ENCODE measurements at regions of chr1 and their contacts with region 1.

Region 1: DNA sequence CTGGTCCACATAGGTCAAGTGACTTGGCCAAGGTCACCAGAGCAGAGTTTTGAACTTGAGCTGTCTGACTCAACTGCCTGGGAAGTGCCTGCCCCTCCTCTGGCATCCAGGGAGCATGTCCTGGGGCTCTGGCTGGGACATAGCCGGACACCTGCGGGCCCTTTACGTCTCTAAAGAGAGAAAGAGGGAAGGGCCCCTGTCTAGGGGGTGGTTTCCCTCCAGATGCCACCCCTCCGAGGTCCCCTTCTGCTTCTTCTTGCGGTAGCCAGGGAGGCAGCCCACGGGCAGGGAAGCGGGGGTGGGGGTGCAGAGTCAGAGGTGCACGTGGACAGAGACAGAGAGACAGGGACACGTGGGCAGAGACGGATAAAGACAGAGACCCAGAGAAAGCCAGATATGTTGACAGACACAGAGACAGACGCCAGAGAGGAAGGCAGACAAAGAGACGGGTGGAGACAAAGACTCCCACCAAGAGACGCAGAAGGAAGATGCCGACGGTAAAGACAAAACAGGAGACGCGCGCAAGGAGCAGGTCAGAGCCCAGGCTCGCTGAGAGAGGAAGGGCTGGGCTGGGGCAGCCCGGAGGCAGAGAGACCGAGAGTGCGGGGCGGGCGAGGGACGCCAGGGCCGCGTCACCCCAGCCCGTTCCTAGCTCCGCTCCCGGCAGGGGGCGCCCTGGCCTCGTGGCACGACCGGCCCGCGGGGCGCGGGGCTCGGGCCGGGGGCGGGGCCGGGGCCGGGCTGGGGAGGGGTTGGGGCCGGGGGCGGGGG is 458 bp upstream of the ALPL start:
- DNase-seq: peak; percentile 31
- ATAC-seq: peak; percentile 83
- H3K4me3 ChIP-seq: 0 out of 2 replicates have a peak overlapping the region, but pooled peaks have one; percentile 4
- H3K27ac ChIP-seq: no peak overlapping the region
- H3K4me1 ChIP-seq: peaks cover 12% of the 10 kb centered on the region
- H3K27me3 ChIP-seq: peaks cover 16% of the 10 kb centered on the region
- CTCF ChIP-seq: peak; percentile 68
- POLR2A ChIP-seq: no peak
- RAD21 ChIP-seq: peak; percentile 65

Region 2: DNA sequence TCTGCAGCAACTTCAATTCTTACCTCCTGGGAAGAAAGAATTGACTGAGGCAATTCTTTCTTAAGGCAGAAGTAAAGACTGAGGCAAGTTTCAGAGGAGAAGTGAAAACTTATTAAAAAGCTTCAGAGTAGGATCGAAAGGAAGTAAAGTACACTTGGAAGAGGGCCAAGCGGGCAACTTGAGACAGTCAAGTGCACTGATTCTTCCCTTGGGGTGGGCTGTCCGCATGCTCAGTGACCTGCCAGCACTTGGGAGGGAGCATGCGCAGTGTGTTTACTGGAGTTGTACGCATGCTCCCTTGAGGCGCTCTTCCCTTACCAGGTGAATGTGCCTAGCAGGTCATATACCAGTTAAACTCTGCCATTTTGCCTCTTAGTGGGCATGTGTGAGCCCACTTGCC is 124.1 kb before region 1 on chr1:
- CTCF ChIA-PET with region 1: no interaction called
- POLR2A ChIA-PET with region 1: no interaction called
- dilution Hi-C with region 1: no loop called
- in situ Hi-C with region 1: no loop called
- intact Hi-C with region 1: no loop called
- DNase-seq: no peak
- ATAC-seq: no peak
- H3K4me3 ChIP-seq: no peak overlapping the region
- H3K27ac ChIP-seq: no peak overlapping the region
- H3K4me1 ChIP-seq: no peaks in the 10 kb centered on the region
- H3K27me3 ChIP-seq: peaks cover 35% of the 10 kb centered on the region
- CTCF ChIP-seq: no peak
- POLR2A ChIP-seq: no peak
- RAD21 ChIP-seq: no peak

Region 3: GRCh38 chr1:21573971-21574465 is 65.3 kb after region 1 on chr1:
- CTCF ChIA-PET with region 1: no interaction called
- POLR2A ChIA-PET with region 1: no interaction called
- dilution Hi-C with region 1: no loop called
- in situ Hi-C with region 1: no loop called
- intact Hi-C with region 1: loop called (anchors 1 kb)
- DNase-seq: peak; percentile 75
- ATAC-seq: peak; percentile 89
- H3K4me3 ChIP-seq: no peak overlapping the region
- H3K27ac ChIP-seq: no peak overlapping the region
- H3K4me1 ChIP-seq: no peaks in the 10 kb centered on the region
- H3K27me3 ChIP-seq: no peaks in the 10 kb centered on the region; the same call in 1 of the 2 replicates
- CTCF ChIP-seq: peak; percentile 76
- POLR2A ChIP-seq: no peak
- RAD21 ChIP-seq: peak; percentile 83

Region 4: DNA sequence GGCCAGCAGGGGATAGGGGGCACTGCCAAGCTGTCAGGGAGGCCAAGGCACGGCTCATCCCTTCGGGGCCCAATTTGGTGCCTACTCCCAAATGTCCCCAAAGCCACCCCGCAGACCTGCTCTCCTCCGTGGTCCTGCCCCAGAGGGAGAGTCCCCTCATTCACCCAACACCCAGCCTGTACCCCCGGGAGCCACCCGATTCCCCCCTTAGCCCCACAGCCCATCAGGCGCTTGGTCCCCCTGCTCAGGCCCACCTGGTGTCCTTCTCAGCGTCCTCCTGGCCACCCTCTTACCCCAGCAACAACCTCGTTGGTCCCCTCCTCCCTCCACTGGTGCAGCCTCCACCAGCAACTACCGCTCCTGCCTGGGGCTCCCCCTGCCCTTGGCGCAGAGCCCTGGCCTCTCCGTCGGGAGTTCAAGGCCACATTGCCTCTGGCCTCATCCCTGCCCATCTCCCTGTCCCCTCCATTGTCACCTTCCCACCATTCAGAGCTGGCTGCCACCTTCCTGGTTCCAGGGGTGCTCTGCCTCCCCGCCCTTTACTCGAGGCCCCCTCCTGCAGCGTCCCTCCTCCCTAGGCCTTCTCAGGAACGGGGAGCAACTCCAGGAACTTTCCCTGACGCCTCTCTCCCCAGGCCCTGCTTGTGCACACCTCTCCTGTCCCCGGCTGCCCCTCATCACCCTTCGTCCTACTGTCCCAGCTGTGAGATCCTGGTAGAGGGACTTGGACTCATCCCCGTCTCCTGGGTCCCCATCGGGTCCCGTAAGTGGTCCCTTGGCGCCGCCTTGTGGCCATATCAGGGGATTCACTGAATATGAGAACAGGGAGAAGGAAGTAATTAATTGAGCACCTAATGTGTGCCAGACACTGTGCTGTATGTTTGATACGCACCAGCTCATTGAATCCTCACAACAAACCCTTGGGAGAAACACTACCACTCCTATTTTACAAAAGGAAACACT is 86.5 kb after region 1 on chr1:
- CTCF ChIA-PET with region 1: no interaction called
- POLR2A ChIA-PET with region 1: no interaction called
- dilution Hi-C with region 1: no loop called
- in situ Hi-C with region 1: loop called (anchors 5 kb)
- intact Hi-C with region 1: loop called (anchors 2 kb)
- DNase-seq: peak; percentile 36
- ATAC-seq: peak; percentile 70
- H3K4me3 ChIP-seq: no peak overlapping the region
- H3K27ac ChIP-seq: no peak overlapping the region
- H3K4me1 ChIP-seq: no peaks in the 10 kb centered on the region
- H3K27me3 ChIP-seq: peaks cover 22% of the 10 kb centered on the region
- CTCF ChIP-seq: peak; percentile 88
- POLR2A ChIP-seq: no peak
- RAD21 ChIP-seq: peak; percentile 94

Region 5: DNA sequence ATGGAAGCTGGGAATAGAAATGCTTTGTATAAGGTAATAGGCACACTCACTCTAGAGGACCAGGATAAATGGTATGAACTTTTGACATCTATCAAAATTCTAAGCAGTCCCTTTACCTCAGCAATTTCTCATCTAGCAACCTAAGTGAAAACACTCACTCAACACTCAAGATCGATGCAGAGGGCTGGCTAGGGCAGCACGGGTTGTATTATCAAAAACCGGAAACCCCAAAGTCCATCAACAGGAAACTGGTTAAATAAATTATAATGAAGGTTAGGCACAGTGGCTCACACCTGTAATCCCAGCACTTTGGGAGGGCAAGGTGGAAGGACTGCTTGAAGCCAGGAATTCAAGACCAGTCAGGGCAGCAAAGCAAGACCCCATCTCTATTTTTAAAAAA is 264.8 kb after region 1 on chr1:
- CTCF ChIA-PET with region 1: no interaction called
- POLR2A ChIA-PET with region 1: no interaction called
- dilution Hi-C with region 1: no loop called
- in situ Hi-C with region 1: no loop called
- intact Hi-C with region 1: no loop called
- DNase-seq: no peak
- ATAC-seq: no peak
- H3K4me3 ChIP-seq: no peak overlapping the region
- H3K27ac ChIP-seq: no peak overlapping the region
- H3K4me1 ChIP-seq: peaks cover 10% of the 10 kb centered on the region
- H3K27me3 ChIP-seq: no peaks in the 10 kb centered on the region
- CTCF ChIP-seq: no peak
- POLR2A ChIP-seq: no peak
- RAD21 ChIP-seq: no peak

Region 6: GRCh38 chr1:22509815-22510214 is 1001.0 kb after region 1 on chr1:
- CTCF ChIA-PET with region 1: no interaction called
- POLR2A ChIA-PET with region 1: no interaction called
- dilution Hi-C with region 1: no loop called
- in situ Hi-C with region 1: no loop called
- intact Hi-C with region 1: no loop called
- DNase-seq: no peak
- ATAC-seq: no peak
- H3K4me3 ChIP-seq: no peak overlapping the region
- H3K27ac ChIP-seq: no peak overlapping the region
- H3K4me1 ChIP-seq: no peaks in the 10 kb centered on the region
- H3K27me3 ChIP-seq: no peaks in the 10 kb centered on the region
- CTCF ChIP-seq: no peak
- POLR2A ChIP-seq: no peak
- RAD21 ChIP-seq: no peak